Breast epithelium (tissue), 4 donors: ENCODE measurements at regions of chrX and their contacts with region 1.

Region 1: DNA sequence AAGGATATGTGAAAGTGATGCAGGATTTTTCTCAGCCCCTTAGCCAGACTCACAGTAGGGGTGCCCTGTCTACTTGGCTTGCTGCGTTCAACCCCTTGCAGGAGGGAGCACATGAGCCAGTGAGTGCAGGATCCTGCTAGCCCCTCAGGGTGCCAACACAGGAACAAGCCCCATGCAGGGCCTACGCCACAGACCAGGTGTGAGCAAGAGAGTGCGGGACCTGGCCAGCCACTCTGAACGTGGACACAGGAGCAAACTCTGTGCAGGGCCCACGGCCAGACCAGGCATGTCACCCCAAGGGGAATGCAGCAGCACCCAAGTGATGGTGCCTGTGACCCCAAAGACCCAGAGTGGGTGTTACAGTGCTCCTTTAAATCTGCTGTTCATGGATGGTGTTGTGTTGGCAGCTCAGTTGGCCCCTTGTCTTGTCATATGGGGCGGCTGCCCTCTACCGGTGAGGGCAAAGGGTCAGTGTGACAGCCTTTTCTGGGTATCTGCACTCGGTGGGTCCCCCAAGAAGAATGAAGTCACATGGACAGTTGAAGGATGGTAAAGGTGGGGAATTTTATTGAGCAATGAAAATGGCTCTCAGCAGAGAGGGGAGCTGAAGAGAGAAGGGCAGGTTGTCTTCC is 188.4 kb upstream of the MAOA start:
- DNase-seq: no peak
- H3K4me3 ChIP-seq: no peak overlapping the region
- H3K27ac ChIP-seq: no peak overlapping the region
- H3K4me1 ChIP-seq: no peaks in the 10 kb centered on the region
- H3K27me3 ChIP-seq: peaks cover 0 to 5% of the 10 kb centered on the region in 2 donors
- CTCF ChIP-seq: no peak
- POLR2A ChIP-seq: no peak

Region 2: GRCh38 chrX:43269201-43269600 is 198.5 kb before region 1 on chrX:
- intact Hi-C with region 1: loop called (anchors 5 kb)
- DNase-seq: no peak
- H3K4me3 ChIP-seq: no peak overlapping the region
- H3K27ac ChIP-seq: no peak overlapping the region
- H3K4me1 ChIP-seq: no peaks in the 10 kb centered on the region
- H3K27me3 ChIP-seq: peaks cover 0 to 23% of the 10 kb centered on the region in 2 donors
- CTCF ChIP-seq: no peak
- POLR2A ChIP-seq: no peak

Region 3: GRCh38 chrX:43456063-43456462 is 11.7 kb before region 1 on chrX:
- intact Hi-C with region 1: no loop called
- DNase-seq: no peak
- H3K4me3 ChIP-seq: no peak overlapping the region
- H3K27ac ChIP-seq: no peak overlapping the region
- H3K4me1 ChIP-seq: no peaks in the 10 kb centered on the region
- H3K27me3 ChIP-seq: peaks cover 0 to 44% of the 10 kb centered on the region in 2 donors
- CTCF ChIP-seq: no peak
- POLR2A ChIP-seq: no peak